Activated naive CD4-positive, alpha-beta T cell treated with anti-CD3 and anti-CD28 coated beads, Interleukin-2, amount 10 ng/mL, durations not matched to agents 7 days and 5 days (primary cell): ENCODE measurements at regions of chr7 and their contacts with region 1.

Region 1: GRCh38 chr7:101410743-101411507 is 48.2 kb downstream of the COL26A1 start:
- DNase-seq: peak; percentile 54
- H3K4me3 Mint-ChIP-seq: no peak overlapping the region
- H3K27ac Mint-ChIP-seq: no peak overlapping the region
- H3K4me1 Mint-ChIP-seq: peaks cover 9% of the 10 kb centered on the region
- H3K27me3 Mint-ChIP-seq: peaks cover 35% of the 10 kb centered on the region

Region 2: DNA sequence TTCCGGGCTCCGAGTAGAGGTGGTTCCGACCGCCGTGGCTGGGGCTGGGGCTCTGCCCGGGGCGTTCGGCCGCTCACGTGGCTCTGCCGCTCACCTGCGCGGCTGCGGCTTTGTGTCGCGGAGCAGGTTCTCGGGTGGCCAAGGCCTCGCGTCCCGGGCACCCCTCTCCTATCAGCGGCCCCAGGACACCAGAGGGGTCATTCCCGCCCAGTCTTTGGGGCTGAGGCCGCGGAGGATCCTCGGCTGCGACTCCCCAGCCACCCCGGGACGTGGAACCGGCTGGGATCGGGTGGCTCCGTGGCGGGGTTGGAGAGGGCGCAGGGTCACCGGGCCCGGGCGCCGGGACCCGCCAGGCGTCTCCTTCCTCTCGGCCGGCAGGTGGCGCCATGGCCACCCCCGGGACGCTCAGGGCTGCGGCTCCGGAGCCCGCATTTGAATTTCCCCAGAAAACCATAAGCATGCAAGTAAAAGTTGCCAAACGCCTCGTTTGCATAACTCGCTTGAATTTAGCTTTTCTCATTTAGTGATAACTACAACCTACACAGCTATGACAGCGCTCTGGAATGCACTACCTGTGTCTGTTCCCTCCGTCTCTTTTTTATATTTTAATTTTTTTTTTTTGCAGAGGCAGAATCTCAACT is 47.1 kb before region 1 on chr7:
- CTCF ChIA-PET with region 1: interaction called, 32 read pairs
- DNase-seq: peak; percentile 77
- H3K4me3 Mint-ChIP-seq: no peak overlapping the region
- H3K27ac Mint-ChIP-seq: no peak overlapping the region
- H3K4me1 Mint-ChIP-seq: no peaks in the 10 kb centered on the region
- H3K27me3 Mint-ChIP-seq: peaks cover 59% of the 10 kb centered on the region

Region 3: GRCh38 chr7:101370836-101371235 is 40.1 kb before region 1 on chr7:
- CTCF ChIA-PET with region 1: interaction called, 32 read pairs
- DNase-seq: no peak
- H3K4me3 Mint-ChIP-seq: no peak overlapping the region
- H3K27ac Mint-ChIP-seq: no peak overlapping the region
- H3K4me1 Mint-ChIP-seq: peaks cover 7% of the 10 kb centered on the region
- H3K27me3 Mint-ChIP-seq: peaks cover 42% of the 10 kb centered on the region

Region 4: DNA sequence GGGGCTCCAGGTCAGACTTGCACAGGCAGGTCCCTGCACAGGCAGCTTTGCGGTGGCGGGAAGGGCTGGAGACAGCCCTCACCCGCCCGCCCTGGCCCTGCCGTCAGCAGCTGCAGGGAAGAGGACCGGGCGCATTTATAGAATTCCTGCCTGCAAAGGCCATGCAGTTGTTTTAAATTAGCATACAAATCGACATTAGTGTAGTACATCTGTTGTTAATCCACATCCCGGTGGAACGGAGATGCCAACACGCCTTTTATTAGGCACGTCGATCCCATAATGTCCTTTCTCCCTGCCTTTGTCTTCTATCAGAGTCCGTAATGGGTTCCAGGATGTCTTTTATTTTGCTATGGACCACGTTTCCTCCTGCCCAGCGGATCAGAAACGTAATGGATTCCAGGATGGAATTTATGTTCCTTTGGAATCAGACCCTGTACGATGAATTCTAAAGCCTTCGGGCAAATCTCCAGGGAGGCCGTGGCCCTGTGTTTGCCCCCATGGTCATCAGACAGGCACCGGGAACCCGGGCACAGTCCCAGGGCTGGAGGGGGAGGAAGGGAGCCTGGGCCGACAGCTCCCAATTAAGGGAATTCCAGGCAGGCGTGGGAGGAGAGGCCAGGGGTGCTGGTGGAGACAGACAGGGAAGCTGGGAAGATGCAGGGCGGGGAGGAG is 75.6 kb after region 1 on chr7:
- CTCF ChIA-PET with region 1: no interaction called
- DNase-seq: no peak
- H3K4me3 Mint-ChIP-seq: no peak overlapping the region
- H3K27ac Mint-ChIP-seq: no peak overlapping the region
- H3K4me1 Mint-ChIP-seq: no peaks in the 10 kb centered on the region
- H3K27me3 Mint-ChIP-seq: peaks cover 16% of the 10 kb centered on the region

Region 5: GRCh38 chr7:101507791-101508252 is 96.9 kb after region 1 on chr7:
- CTCF ChIA-PET with region 1: interaction called, 20 read pairs
- DNase-seq: peak; percentile 66
- H3K4me3 Mint-ChIP-seq: peak overlapping the region; percentile 50
- H3K27ac Mint-ChIP-seq: peak overlapping the region; percentile 9
- H3K4me1 Mint-ChIP-seq: peaks cover 22% of the 10 kb centered on the region
- H3K27me3 Mint-ChIP-seq: peaks cover 42% of the 10 kb centered on the region

Region 6: DNA sequence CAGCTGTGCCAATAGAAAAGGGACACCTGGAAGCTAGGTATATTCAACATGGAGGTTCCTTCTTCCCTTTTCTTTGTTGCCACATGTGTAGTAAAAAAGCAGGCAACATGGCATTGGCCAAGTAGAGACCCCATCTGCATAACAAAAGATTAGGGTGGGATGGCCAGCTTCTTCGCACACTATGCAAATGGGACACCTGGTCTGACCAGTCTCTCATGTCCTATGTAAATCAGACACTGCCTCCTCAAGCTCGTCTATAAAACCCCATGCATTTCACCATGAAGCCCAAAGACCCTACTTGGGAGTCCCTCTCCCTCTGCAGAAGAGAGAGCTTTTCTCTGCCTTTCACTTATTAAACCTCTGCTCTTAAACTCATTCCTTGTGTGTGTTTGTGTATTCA is 164.2 kb after region 1 on chr7:
- CTCF ChIA-PET with region 1: no interaction called
- DNase-seq: no peak
- H3K4me3 Mint-ChIP-seq: no peak overlapping the region
- H3K27ac Mint-ChIP-seq: no peak overlapping the region
- H3K4me1 Mint-ChIP-seq: no peaks in the 10 kb centered on the region
- H3K27me3 Mint-ChIP-seq: peaks cover 10% of the 10 kb centered on the region